ENCODE measurements at regions of chrX and their contacts with region 1.

Region 1: GRCh38 chrX:136880452-136881013 is at the start of gene RBMX:
- DNase-seq: peak; percentile 89
- CTCF ChIP-seq: no peak

Region 2: DNA sequence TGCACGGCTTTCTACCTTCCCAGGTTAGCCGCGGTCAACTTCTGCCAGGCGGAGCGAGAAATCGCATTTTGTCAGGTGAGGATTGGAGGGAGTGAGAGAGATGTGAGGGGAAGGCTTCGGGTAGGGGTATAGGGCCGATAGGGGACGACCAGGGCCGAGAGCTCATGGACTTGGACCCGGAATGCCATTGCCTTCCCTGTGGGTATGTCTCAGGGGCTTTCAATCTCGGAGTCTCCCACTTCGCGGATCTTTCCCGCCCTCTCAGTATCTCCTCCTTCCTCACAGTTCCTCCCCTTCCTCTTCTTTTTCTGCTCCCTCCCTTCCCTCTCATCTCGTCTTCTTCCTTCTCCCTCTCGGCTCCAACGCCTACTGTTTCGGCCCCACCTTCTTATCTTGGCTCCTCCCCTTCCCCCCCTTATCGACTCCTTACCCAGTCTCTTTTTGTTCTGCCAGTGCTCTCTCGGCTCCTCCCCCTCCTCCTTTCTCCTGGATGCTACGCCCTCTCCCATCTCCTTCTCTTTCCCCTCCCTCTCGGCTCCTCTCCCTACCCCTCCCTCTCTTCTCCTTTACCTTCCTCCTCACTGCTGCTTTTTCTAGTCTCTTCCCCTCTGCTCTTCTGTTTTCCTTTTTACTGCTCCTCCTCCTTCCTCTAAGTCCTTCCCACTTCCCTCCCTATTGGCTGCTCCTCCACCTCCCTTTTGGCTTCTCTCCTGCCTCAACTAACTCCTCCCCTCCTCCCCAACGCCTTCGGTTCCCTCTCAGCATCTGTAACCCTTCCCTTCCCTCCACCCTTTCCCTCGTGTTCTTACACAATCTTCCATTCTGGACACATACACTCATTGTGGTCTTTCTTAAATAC is 29.4 kb after region 1 on chrX:
- CTCF ChIA-PET with region 1: no interaction called
- POLR2A ChIA-PET with region 1: interaction called, 12 read pairs
- DNase-seq: peak; percentile 55
- CTCF ChIP-seq: no peak

Measured in GM10248 (cell line).